ENCODE measurements at regions of chr1 and their contacts with region 1.

Region 1: DNA sequence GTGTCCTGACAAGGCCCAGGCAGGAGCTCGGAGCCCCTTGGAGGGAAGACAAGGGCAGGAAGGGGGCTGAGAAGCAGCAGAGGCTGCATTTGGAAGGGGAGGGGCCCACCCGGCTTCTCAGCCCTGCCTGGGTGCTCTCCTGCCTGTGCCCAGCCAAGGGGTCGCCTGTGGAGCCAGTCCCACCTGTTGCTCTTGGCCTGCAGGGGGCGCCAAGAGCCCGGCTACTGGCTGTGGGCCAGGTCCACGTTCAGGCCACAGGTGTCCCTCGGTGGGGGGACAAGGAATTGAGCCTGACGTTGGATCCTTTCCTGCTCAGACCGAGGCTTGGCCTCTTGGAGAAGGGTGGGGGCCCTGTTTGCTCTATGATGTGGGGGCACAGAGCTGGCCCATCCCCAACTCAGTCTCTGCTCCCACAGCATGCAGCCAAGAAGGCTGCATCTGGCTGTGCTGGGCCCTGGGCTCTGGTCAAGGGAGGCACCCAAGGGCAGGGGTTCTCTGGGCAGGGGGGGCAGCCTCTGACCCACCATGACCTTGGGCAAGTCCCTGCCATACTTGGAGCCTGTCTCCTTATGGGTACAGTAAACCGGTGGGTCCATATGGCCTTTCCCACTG is 10.9 kb downstream of the WNT4 start:
- DNase-seq: peak; percentile 47
- ATAC-seq: peak; percentile 22 to 31

Region 2: GRCh38 chr1:22275721-22276395 is 143.9 kb after region 1 on chr1:
- intact Hi-C with region 1: loop called in 1 of 2 experiments (anchors 10 kb)
- DNase-seq: peak; percentile 40
- ATAC-seq: peak; percentile 65 to 83

Measured in left cardiac atrium (tissue), 4 donors.